ENCODE measurements at regions of chr20 and their contacts with region 1.

Region 1: DNA sequence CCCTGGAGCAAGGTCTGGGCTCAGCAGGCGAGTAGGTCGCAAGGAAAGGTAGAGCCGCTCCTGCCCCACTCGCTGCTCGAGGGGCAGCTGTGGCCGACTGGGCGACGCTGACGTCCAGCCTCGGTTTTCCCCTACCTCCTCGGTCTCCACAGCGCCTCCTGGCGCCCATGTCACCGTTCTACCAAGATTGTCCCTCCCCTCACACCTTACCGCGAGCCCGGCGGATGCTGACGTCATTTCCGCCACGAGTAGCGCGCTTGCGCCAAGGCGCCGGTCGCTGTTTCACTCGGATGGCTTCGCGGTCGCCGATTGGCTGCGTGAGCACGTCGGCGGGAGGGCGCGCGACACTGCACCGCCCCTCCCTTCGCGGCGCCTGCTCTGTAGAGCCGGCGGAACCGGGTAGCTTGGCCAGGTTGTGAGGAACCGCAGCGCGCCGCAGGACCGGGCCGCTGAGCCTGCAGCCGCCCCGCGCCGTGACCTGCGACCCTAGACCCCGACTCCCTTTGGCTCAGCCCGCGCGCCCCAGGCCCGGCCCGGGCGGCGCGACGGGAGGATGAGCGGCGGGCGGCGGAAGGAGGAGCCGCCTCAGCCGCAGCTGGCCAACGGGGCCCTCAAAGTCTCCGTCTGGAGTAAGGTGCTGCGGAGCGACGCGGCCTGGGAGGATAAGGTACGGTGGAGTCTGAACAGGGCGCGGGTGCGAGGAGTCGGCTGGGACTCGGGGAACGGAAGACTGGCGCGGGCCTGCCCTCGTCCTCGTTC is at the start of gene RAB5IF:
- DNase-seq: peak; percentile 98 to 99 (median 99)
- H3K4me3 ChIP-seq: peak within 1 kb of the TSS; percentile 62 to 81
- H3K4me3 Mint-ChIP-seq: peak within 1 kb of the TSS; percentile 91 to 98 (median 97)
- H3K27ac ChIP-seq: peak within 1 kb of the TSS; percentile 98
- H3K27ac Mint-ChIP-seq: peak within 1 kb of the TSS; percentile 97 to 99 (median 98)
- H3K4me1 ChIP-seq: peaks cover 30% of the 10 kb centered on the region
- H3K4me1 Mint-ChIP-seq: peaks cover 15 to 43% (median 26%) of the 10 kb centered on the region in 4 donors
- H3K27me3 ChIP-seq: no peaks in the 10 kb centered on the region
- H3K27me3 Mint-ChIP-seq: peaks cover 1 to 2% of the 10 kb centered on the region in 2 donors
- total RNA-seq, gene RAB5IF: 63.4 to 67.5 TPM

Region 2: DNA sequence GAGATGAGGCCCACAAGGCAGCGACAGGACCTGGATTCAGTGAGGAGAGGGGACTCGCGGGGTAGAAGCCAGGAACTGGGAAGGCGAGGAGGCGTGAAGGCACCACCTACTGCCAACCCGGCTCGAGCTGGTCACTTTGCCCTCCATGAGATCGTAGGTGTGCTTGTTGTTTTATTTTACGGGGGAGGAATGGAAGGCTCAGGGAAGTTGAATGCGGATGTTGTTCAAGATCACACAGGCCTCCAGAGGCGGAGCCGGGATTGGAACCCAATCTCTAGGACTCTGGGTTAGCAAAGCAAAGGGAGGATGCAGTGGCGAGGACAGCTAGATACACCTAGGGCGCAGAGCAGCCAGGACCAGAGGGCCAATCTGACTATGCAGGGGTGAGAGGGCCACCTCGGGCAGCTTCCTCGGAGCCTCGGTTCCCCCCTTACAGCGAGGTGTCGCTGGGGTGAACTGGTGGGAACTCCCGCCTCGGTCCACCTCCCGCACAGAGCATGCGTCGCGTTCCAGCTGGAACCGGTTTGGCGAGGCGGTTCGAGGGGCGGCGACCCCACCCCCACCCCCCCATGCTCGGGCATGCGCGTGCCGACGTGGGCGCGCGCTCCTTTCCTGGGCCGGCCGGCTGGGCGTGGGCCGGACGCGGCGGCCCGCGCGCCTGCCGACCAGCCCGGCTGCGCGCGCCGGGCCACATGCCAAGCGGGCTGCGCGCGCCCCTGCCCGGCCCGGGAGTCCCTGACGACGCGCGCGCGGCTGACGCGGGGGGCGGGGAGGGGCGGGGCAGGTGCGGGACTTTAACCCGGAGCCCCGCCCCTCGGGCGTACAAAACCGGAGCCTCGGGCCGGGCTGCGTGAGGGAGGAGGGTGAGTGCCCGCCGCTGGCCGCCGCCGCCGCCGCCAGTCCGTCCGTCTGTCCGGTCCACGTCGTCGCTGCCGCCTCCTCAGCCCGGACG is 144.7 kb before region 1 on chr20:
- CTCF ChIA-PET with region 1: no interaction called
- POLR2A ChIA-PET with region 1: interaction called, 8 read pairs
- intact Hi-C with region 1: loop called (anchors 2 kb)
- DNase-seq: peak; percentile 85 to 90 (median 86)
- H3K4me3 ChIP-seq: peak overlapping the region; percentile 8 to 37
- H3K4me3 Mint-ChIP-seq: peak overlapping the region; percentile 80 to 86 (median 82)
- H3K27ac ChIP-seq: peak overlapping the region; percentile 90
- H3K27ac Mint-ChIP-seq: peak overlapping the region; percentile 94 to 97 (median 96)
- H3K4me1 ChIP-seq: peaks cover 48% of the 10 kb centered on the region
- H3K4me1 Mint-ChIP-seq: peaks cover 31 to 56% (median 42%) of the 10 kb centered on the region in 4 donors
- H3K27me3 ChIP-seq: no peaks in the 10 kb centered on the region
- H3K27me3 Mint-ChIP-seq: no peaks in the 10 kb centered on the region

Region 3: GRCh38 chr20:36550797-36551299 is 54.7 kb before region 1 on chr20:
- CTCF ChIA-PET with region 1: interaction called, 3 read pairs
- POLR2A ChIA-PET with region 1: no interaction called
- intact Hi-C with region 1: loop called (anchors 1 kb)
- DNase-seq: no peak
- H3K4me3 ChIP-seq: no peak overlapping the region
- H3K4me3 Mint-ChIP-seq: no peak overlapping the region
- H3K27ac ChIP-seq: no peak overlapping the region
- H3K27ac Mint-ChIP-seq: no peak overlapping the region
- H3K4me1 ChIP-seq: no peaks in the 10 kb centered on the region
- H3K4me1 Mint-ChIP-seq: peaks cover 0 to 7% (median under 1%) of the 10 kb centered on the region in 4 donors
- H3K27me3 ChIP-seq: no peaks in the 10 kb centered on the region
- H3K27me3 Mint-ChIP-seq: no peaks in the 10 kb centered on the region

Region 4: DNA sequence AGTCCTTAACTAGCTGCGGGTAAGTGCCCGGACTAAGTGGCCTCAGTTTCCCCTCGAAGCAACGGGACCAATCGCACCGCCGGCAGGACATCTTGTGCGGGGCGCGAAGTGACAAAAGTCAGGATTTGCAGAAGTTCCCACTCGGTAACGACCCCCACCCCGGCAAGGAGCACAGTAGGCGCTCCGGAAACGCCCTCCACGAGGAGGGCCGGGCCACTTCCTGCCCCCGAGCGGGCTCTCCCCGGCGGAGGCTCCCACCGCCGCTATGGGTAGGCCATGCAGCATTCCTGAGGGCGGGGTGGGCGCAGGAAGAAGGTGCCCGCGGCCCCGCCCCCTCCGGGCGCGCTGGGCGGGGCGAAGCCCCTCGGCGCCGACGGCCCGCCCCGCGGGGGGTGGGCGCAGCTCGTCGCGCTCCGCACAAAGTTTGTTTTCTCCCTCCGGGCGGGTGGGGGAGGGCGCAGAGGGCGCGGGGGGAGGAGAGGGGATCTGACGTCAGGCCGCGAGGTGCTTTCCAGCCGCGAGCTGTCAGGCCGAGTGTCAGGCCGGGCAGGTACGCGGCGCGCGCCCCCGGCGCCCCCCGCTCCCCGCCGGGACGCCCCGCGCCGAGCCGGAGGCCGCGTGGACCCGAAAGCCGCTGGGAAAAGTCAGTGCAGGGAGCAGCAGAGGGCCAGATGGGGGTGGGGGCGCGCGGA is 32.3 kb before region 1 on chr20 and contains the start of gene TGIF2:
- CTCF ChIA-PET with region 1: interaction called, 37 read pairs
- POLR2A ChIA-PET with region 1: interaction called, 153 read pairs
- intact Hi-C with region 1: loop called (anchors 1 kb)
- DNase-seq: peak; percentile 87 to 92 (median 89)
- H3K4me3 ChIP-seq: peak within 1 kb of the TSS; percentile 47 to 73
- H3K4me3 Mint-ChIP-seq: peak within 1 kb of the TSS; percentile 89 to 96 (median 92)
- H3K27ac ChIP-seq: peak within 1 kb of the TSS; percentile 100
- H3K27ac Mint-ChIP-seq: peak within 1 kb of the TSS; percentile 95 to 99 (median 99)
- H3K4me1 ChIP-seq: peaks cover 35% of the 10 kb centered on the region
- H3K4me1 Mint-ChIP-seq: peaks cover 24 to 46% (median 30%) of the 10 kb centered on the region in 4 donors
- H3K27me3 ChIP-seq: no peaks in the 10 kb centered on the region
- H3K27me3 Mint-ChIP-seq: no peaks in the 10 kb centered on the region
- total RNA-seq, gene TGIF2: 31.7 to 35.0 TPM

Region 5: DNA sequence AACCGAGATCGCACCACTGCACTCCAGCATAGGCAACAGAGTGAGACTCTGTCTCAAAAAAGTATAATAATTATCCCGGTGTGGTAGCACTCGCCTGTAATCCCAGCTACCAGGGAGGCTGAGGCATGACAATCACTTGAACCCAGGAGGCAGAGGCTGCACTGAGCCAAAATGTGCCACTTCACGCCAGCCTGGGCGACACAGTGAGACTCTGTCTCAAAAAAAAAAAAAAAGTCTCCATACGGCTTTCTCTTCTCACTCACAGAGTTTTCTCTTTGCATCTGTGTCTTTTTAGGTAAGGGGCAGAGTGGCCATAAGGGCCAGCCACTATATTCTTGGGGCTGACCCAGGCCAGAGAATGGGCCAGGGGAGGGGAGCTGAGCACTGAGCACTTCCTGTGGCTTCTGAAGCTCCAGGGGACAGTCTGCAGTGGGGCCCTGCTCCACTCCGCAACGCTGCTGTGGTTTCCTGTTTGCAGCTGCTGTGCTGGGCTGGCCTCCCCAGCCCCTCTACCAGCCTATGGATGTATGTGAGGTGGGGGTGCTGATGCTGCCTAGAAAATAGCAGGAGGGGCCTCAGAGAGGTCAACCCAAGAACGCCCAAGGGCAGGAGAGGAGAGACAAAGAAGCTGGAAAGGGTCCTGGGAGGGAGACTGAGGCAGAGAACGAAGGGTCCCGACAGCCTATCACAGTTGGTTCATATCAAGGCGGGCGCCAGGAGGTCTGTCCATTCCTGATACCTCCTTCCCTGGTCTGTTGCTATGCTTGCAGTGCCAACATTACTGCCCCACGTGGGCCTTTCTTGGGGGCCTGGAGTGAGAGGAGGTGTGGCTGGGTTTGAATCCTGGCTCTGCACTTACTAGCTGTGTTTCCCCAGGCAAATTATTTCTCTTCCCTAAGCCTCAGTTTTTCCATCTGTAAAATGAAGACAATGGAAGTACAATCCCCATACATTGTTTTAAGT is 24.4 kb after region 1 on chr20:
- CTCF ChIA-PET with region 1: interaction called, 6 read pairs
- POLR2A ChIA-PET with region 1: interaction called, 27 read pairs
- intact Hi-C with region 1: loop called (anchors 1 kb)
- DNase-seq: peak; percentile 37 to 52 (median 43)
- H3K4me3 ChIP-seq: peak overlapping the region in 1 of 2 donors; percentile 27
- H3K4me3 Mint-ChIP-seq: peak overlapping the region; percentile 75 to 91 (median 80)
- H3K27ac ChIP-seq: peak overlapping the region; percentile 36
- H3K27ac Mint-ChIP-seq: peak overlapping the region; percentile 94 to 98 (median 96)
- H3K4me1 ChIP-seq: peaks cover 32% of the 10 kb centered on the region
- H3K4me1 Mint-ChIP-seq: peaks cover 21 to 61% (median 45%) of the 10 kb centered on the region in 4 donors
- H3K27me3 ChIP-seq: no peaks in the 10 kb centered on the region
- H3K27me3 Mint-ChIP-seq: no peaks in the 10 kb centered on the region

Region 6: DNA sequence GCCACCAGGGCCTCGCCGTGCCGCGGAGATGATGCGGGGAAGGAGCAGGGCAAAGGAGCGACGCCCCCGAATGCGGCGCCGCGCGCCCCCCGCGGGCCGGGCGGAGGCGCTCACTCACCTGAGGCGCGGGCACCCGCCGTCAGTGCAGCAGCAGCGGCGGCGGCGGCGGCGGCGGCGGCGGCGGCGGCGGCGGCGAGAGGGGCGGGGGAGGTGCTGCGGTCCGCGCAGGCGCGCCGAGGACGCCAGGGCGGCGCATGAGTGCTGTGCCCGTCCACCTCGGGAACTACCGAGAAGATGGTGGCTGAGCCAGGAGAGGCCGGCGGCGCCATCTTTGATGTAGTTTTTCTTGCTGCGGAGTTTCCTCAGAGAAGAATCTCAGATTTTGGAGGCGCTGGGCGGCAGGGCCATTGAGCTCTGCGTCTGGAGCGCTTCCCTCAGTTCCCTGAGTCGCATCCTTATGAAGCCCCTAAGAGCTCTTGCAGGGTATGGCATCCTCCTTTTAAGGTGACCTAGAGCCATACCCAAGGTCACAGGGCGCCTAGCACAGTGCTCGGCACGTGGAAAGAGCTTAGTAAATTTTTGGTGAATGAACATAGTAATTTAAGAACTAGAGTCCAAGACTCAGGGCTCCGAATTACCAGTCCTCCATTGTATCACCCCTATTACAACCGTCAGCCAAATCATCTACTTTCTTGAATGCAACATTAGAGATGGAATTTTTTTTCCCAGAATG is 140.5 kb after region 1 on chr20 and contains the start of gene NDRG3:
- CTCF ChIA-PET with region 1: interaction called, 3 read pairs
- POLR2A ChIA-PET with region 1: interaction called, 14 read pairs
- intact Hi-C with region 1: loop called (anchors 1 kb)
- DNase-seq: peak; percentile 90 to 94 (median 93)
- H3K4me3 ChIP-seq: peak within 1 kb of the TSS; percentile 79 to 86
- H3K4me3 Mint-ChIP-seq: peak within 1 kb of the TSS; percentile 88 to 95 (median 91)
- H3K27ac ChIP-seq: peak within 1 kb of the TSS; percentile 63
- H3K27ac Mint-ChIP-seq: peak within 1 kb of the TSS; percentile 90 to 97 (median 94)
- H3K4me1 ChIP-seq: peaks cover 21% of the 10 kb centered on the region
- H3K4me1 Mint-ChIP-seq: peaks cover 19 to 41% (median 21%) of the 10 kb centered on the region in 4 donors
- H3K27me3 ChIP-seq: no peaks in the 10 kb centered on the region
- H3K27me3 Mint-ChIP-seq: no peaks in the 10 kb centered on the region
- total RNA-seq, gene NDRG3: 36.1 to 36.2 TPM

Region 7: GRCh38 chr20:36773597-36774390 is 168.2 kb after region 1 on chr20 and contains the start of gene DSN1:
- CTCF ChIA-PET with region 1: interaction called, 3 read pairs
- POLR2A ChIA-PET with region 1: interaction called, 19 read pairs
- intact Hi-C with region 1: no loop called
- DNase-seq: peak; percentile 95 to 99 (median 97)
- H3K4me3 ChIP-seq: peak within 1 kb of the TSS; percentile 85 to 95
- H3K4me3 Mint-ChIP-seq: peak within 1 kb of the TSS; percentile 92 to 100 (median 96)
- H3K27ac ChIP-seq: peak within 1 kb of the TSS; percentile 85
- H3K27ac Mint-ChIP-seq: peak within 1 kb of the TSS; percentile 95 to 100 (median 98)
- H3K4me1 ChIP-seq: peaks cover 13% of the 10 kb centered on the region
- H3K4me1 Mint-ChIP-seq: peaks cover 9 to 24% (median 18%) of the 10 kb centered on the region in 4 donors
- H3K27me3 ChIP-seq: no peaks in the 10 kb centered on the region
- H3K27me3 Mint-ChIP-seq: no peaks in the 10 kb centered on the region
- total RNA-seq, gene DSN1: 12.8 to 14.3 TPM